ENCODE measurements at regions of chr11 and their contacts with region 1.

Region 1: DNA sequence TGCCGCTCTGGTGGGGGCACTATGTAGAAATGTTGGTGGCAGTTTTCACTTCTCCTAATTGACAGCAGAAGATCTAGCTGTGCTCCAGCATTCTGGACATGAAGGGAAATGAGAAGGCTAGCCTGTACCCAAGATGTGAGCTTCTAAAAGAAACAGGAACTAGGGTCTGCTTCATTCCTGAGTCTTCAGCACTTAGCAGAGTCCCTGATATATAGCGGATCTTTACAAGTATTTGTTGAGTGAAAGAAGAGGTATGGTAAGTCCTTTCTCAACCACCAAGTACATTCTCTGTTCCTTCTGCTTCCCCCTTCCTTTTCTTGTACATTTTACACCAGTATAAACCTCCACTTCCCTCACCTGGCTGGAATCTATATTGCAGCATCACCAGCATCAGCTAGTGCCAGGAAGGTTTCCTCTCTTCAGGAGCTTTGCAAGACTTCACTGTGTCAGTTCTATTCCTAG is 408.3 kb upstream of the CADM1 start:
- DNase-seq: no peak
- ATAC-seq: peak; percentile 90
- H3K4me3 ChIP-seq: no peak overlapping the region; the same call in 1 of the 2 replicates
- H3K27ac ChIP-seq: peak overlapping the region; percentile 56
- H3K4me1 ChIP-seq: peaks cover 24% of the 10 kb centered on the region
- H3K27me3 ChIP-seq: no peaks in the 10 kb centered on the region
- CTCF ChIP-seq: peak; percentile 42 to 67 (median 48); a peak in 5 of 6 replicates
- EP300 ChIP-seq: no peak
- POLR2A ChIP-seq: no peak
- RAD21 ChIP-seq: peak; percentile 85

Region 2: DNA sequence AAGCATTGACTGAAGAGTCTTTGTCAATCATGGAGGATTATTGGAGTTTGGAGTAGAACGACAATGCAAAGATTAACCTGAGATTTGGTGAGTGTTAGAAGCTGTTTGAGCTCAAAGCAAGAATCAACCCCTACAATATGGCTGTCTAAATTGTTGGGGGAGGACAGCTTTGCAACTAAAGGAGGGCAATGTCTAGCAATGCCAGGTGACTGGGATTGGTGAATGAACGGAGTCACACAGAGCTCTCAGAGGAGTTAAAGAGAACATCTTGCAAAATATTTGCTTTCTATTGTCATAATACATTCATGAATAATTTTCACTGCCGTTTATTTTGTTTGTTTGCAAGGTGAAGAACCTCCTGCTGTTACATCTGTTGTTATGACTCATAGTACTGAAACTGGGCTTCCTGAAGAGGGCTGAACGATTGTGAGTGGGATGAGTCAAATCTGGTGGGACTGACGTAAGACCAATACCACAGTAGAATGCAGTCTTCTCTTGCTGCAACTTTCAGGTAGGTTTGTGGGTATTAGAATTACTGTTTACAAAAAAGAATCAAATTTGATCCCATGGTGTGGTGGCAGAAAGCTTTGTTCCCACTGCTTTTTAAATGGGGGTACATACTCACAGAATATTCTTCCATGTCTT is 690.2 kb before region 1 on chr11:
- CTCF ChIA-PET with region 1: no interaction called
- POLR2A ChIA-PET with region 1: no interaction called
- RAD21 ChIA-PET with region 1: no interaction called
- SMC1A ChIA-PET with region 1: no interaction called
- in situ Hi-C with region 1: loop called (anchors 10 kb)
- intact Hi-C with region 1: no loop called
- DNase-seq: peak; percentile 96
- ATAC-seq: peak; percentile 96
- H3K4me3 ChIP-seq: peak overlapping the region; percentile 36
- H3K27ac ChIP-seq: peak overlapping the region; percentile 77
- H3K4me1 ChIP-seq: peaks cover 18% of the 10 kb centered on the region
- H3K27me3 ChIP-seq: no peaks in the 10 kb centered on the region
- CTCF ChIP-seq: no peak
- EP300 ChIP-seq: peak; percentile 95 to 96; a peak in 3 of 4 replicates
- POLR2A ChIP-seq: no peak
- RAD21 ChIP-seq: no peak

Region 3: GRCh38 chr11:115716601-115717529 is 195.7 kb before region 1 on chr11:
- CTCF ChIA-PET with region 1: no interaction called
- POLR2A ChIA-PET with region 1: no interaction called
- RAD21 ChIA-PET with region 1: no interaction called
- SMC1A ChIA-PET with region 1: no interaction called
- in situ Hi-C with region 1: no loop called
- intact Hi-C with region 1: no loop called
- DNase-seq: no peak
- ATAC-seq: no peak
- H3K4me3 ChIP-seq: no peak overlapping the region
- H3K27ac ChIP-seq: no peak overlapping the region
- H3K4me1 ChIP-seq: no peaks in the 10 kb centered on the region
- H3K27me3 ChIP-seq: peaks cover 0 to 1% of the 10 kb centered on the region in 2 experiments; a peak in 2 of 4 replicates
- CTCF ChIP-seq: no peak
- EP300 ChIP-seq: no peak
- POLR2A ChIP-seq: no peak
- RAD21 ChIP-seq: no peak

Region 4: DNA sequence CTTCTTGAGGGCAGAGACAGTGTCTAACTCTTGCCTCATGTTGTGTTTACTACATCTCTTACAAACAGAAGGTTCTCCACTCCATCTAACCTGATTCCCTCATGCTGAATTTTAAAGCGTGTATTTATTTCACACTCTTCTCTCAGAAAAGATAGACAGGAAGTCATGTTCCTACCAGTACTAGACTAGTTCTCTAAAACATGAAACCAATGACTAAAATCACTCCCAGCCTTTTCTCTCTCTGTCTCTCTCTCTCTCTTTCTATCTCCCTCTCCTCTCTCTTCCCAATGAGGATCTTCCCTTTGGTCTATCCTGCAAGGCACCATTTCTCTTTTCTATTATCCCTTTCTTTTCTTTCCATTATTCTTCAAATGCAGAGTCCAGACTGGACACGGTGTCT is 16.4 kb before region 1 on chr11:
- CTCF ChIA-PET with region 1: interaction called, 8 read pairs
- POLR2A ChIA-PET with region 1: interaction called, 3 read pairs
- RAD21 ChIA-PET with region 1: no interaction called
- SMC1A ChIA-PET with region 1: interaction called, 18 read pairs
- in situ Hi-C with region 1: no loop called
- intact Hi-C with region 1: no loop called
- DNase-seq: no peak
- ATAC-seq: peak; percentile 44
- H3K4me3 ChIP-seq: no peak overlapping the region
- H3K27ac ChIP-seq: no peak overlapping the region
- H3K4me1 ChIP-seq: peaks cover 14% of the 10 kb centered on the region
- H3K27me3 ChIP-seq: no peaks in the 10 kb centered on the region
- CTCF ChIP-seq: no peak
- EP300 ChIP-seq: no peak
- POLR2A ChIP-seq: no peak
- RAD21 ChIP-seq: no peak